ENCODE measurements at regions of chr3 and their contacts with region 1.

Region 1: DNA sequence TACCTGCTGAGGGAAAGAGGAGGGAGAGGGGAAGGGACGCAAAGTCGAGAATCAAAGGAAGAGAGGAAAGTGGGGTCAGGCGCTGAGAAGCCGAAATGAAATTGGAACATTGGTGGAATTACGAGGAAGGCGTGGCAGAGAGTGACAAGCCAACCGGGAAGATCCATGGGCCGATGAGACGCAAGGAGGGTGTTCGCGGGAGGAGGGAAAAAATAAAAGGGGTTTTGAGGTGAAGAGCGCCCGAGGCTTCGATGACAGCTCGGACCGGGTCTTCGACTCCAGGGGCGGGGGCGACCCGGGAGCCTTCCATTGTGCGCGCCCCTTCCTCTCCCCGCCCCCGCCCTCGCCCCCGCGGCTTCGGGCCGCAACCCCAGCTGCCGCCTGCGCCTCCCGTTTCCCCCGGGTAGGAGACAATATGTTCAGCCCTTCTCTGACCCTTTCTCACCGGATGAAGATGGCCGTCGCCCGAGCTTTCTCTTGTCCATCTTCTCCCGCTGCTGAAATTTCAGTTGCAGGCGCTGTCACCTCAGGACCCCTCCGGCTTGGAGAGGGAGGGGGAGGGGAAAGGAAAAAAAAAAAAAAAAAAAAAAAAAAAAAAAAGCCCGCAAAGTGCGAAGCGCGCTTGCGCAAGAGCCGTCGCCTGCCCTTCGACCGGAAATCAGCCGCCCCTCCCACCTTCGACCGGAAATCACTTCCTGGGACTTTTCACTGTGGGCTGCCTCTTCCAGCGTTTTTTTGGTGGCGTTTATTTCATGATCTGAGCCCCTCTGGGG is at the start of gene SENP7:
- DNase-seq: peak; percentile 86
- H3K4me3 ChIP-seq: peak within 1 kb of the TSS; percentile 70 to 91 (median 74)
- H3K27ac ChIP-seq: peak within 1 kb of the TSS; percentile 93
- H3K4me1 ChIP-seq: peaks cover 13% of the 10 kb centered on the region
- H3K27me3 ChIP-seq: no peaks in the 10 kb centered on the region
- CTCF ChIP-seq: no peak
- POLR2A ChIP-seq: peak; percentile 81
- total RNA-seq, gene SENP7: 18.7 and 20.2 TPM in 2 replicates

Region 2: GRCh38 chr3:101381809-101382208 is 131.0 kb before region 1 on chr3:
- CTCF ChIA-PET with region 1: no interaction called
- POLR2A ChIA-PET with region 1: no interaction called
- dilution Hi-C with region 1: no loop called
- intact Hi-C with region 1: no loop called
- DNase-seq: peak; percentile 40
- H3K4me3 ChIP-seq: no peak overlapping the region
- H3K27ac ChIP-seq: no peak overlapping the region
- H3K4me1 ChIP-seq: no peaks in the 10 kb centered on the region
- H3K27me3 ChIP-seq: no peaks in the 10 kb centered on the region
- CTCF ChIP-seq: peak; percentile 7 to 11
- POLR2A ChIP-seq: no peak

Region 3: GRCh38 chr3:101466465-101467309 is 46.1 kb before region 1 on chr3:
- CTCF ChIA-PET with region 1: no interaction called
- POLR2A ChIA-PET with region 1: no interaction called
- dilution Hi-C with region 1: no loop called
- intact Hi-C with region 1: no loop called
- DNase-seq: no peak
- H3K4me3 ChIP-seq: no peak overlapping the region
- H3K27ac ChIP-seq: no peak overlapping the region
- H3K4me1 ChIP-seq: no peaks in the 10 kb centered on the region
- H3K27me3 ChIP-seq: no peaks in the 10 kb centered on the region
- CTCF ChIP-seq: no peak
- POLR2A ChIP-seq: no peak

Region 4: GRCh38 chr3:101561630-101562328 is 48.9 kb after region 1 on chr3 and contains the start of gene TRMT10C:
- CTCF ChIA-PET with region 1: no interaction called
- POLR2A ChIA-PET with region 1: interaction called, 4 read pairs
- dilution Hi-C with region 1: no loop called
- intact Hi-C with region 1: loop called (anchors 1 kb)
- DNase-seq: peak; percentile 95
- H3K4me3 ChIP-seq: peak within 1 kb of the TSS; percentile 97 to 98 (median 98)
- H3K27ac ChIP-seq: peak within 1 kb of the TSS; percentile 89
- H3K4me1 ChIP-seq: peaks cover 10% of the 10 kb centered on the region
- H3K27me3 ChIP-seq: peaks cover 0 to 10% of the 10 kb centered on the region in 2 experiments
- CTCF ChIP-seq: no peak
- POLR2A ChIP-seq: peak; percentile 94
- total RNA-seq, gene TRMT10C: 28.0 and 29.6 TPM in 2 replicates

Measured in endothelial cell of umbilical vein (primary cell).